Right ventricle myocardium superior (tissue), 1 donor: ENCODE measurements at regions of chr7 and their contacts with region 1.

Region 1: DNA sequence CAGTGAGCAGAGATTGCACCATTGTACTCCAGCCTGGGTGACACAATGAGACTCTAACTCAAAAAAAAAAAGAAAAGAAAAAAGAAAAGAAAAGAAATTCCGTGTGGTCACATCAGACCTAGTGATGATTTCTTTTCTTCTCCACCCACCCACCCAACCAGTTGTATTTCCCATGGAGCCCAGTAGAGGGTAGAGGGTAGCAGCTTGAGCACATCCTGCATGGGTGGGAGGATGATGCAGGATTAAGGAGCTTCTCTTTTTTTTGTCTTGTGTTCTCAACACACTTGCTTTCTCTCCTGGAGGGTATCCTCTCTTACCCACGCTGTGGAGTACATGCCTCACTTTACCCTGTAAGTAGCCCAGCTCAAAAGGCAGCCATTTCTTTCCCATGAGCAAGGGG is 118.6 kb upstream of the CARD11 start:
- DNase-seq: no peak
- ATAC-seq: no peak

Region 2: GRCh38 chr7:2886900-2887299 is 275.4 kb before region 1 on chr7:
- intact Hi-C with region 1: loop called (anchors 10 kb)
- DNase-seq: peak; percentile 50
- ATAC-seq: peak; percentile 82

Region 3: DNA sequence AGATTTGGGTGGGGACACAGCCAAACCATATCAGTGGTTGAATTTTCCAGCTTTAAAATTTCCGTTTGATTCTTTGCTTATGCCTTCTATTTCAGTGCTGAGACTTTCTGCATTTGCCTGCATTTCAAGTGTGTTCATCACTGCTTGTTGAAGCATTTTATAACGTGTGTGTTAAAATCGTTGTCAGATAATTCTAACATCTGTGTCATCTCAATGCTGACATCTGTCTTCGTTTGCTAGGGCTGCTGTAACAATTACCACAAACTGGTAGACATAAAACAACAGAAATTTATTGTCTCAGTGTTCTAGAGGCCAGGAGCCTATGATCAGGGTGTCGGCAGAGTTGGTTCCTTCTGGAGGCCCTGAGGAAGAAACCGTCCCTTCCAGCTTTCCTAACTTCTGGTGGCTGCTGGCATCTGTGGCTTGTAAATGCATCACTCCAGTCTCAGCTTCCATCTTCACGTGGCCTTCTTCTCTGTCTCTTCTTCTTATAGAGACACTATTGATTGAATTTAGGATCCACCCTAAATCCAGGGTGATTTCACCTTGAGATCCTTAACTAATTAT is 67.7 kb after region 1 on chr7:
- intact Hi-C with region 1: loop called (anchors 10 kb)
- DNase-seq: no peak
- ATAC-seq: no peak

Region 4: GRCh38 chr7:3300651-3301378 is 138.5 kb after region 1 on chr7 and contains the start of gene SDK1:
- intact Hi-C with region 1: loop called (anchors 5 kb)
- DNase-seq: peak; percentile 95
- ATAC-seq: peak; percentile 98
- total RNA-seq, gene SDK1: 2.2 TPM